GM12878 (cell line): ENCODE measurements at regions of chr9 and their contacts with region 1.

Region 1: GRCh38 chr9:122912964-122913673 is at the start of gene ZBTB6:
- DNase-seq: peak; percentile 84
- ATAC-seq: peak; percentile 98
- H3K4me3 ChIP-seq: peak within 1 kb of the TSS; percentile 78
- H3K27ac ChIP-seq: peak within 1 kb of the TSS; percentile 87
- H3K4me1 ChIP-seq: peaks cover 4% of the 10 kb centered on the region; the same call in 1 of the 2 replicates
- H3K27me3 ChIP-seq: no peaks in the 10 kb centered on the region
- CTCF ChIP-seq: no peak
- EP300 ChIP-seq: no peak
- POLR2A ChIP-seq: peak; percentile 92
- RAD21 ChIP-seq: peak; percentile 44; the same call in 1 of the 2 replicates
- polyA plus RNA-seq, gene ZBTB6: 1.7 to 3.0 TPM

Region 2: DNA sequence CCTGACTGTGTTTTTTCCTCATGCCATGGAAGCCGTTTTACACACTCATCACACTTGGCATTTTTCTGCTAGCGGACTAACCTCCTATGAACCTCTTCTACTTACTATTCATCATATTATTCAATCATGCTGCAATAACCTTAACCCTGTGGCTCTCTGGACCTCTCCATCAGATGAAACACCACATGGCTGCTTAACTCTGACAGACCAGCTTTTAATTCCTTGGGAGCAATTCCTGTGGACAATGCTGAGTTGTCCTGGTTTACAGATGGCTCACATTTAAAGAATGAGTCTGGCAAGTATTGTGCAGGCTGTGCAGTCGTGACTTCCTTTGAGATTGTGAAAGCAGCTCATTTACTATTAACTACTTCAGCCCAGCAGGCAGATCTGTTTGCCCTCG is 444.4 kb before region 1 on chr9:
- CTCF ChIA-PET with region 1: no interaction called
- POLR2A ChIA-PET with region 1: no interaction called
- RAD21 ChIA-PET with region 1: no interaction called
- SMC1A ChIA-PET with region 1: no interaction called
- in situ Hi-C with region 1: no loop called
- intact Hi-C with region 1: no loop called
- DNase-seq: no peak
- ATAC-seq: no peak
- H3K4me3 ChIP-seq: no peak overlapping the region
- H3K27ac ChIP-seq: no peak overlapping the region
- H3K4me1 ChIP-seq: no peaks in the 10 kb centered on the region
- H3K27me3 ChIP-seq: no peaks in the 10 kb centered on the region; a peak in 1 of 4 replicates
- CTCF ChIP-seq: no peak
- EP300 ChIP-seq: no peak
- POLR2A ChIP-seq: no peak
- RAD21 ChIP-seq: no peak

Region 3: DNA sequence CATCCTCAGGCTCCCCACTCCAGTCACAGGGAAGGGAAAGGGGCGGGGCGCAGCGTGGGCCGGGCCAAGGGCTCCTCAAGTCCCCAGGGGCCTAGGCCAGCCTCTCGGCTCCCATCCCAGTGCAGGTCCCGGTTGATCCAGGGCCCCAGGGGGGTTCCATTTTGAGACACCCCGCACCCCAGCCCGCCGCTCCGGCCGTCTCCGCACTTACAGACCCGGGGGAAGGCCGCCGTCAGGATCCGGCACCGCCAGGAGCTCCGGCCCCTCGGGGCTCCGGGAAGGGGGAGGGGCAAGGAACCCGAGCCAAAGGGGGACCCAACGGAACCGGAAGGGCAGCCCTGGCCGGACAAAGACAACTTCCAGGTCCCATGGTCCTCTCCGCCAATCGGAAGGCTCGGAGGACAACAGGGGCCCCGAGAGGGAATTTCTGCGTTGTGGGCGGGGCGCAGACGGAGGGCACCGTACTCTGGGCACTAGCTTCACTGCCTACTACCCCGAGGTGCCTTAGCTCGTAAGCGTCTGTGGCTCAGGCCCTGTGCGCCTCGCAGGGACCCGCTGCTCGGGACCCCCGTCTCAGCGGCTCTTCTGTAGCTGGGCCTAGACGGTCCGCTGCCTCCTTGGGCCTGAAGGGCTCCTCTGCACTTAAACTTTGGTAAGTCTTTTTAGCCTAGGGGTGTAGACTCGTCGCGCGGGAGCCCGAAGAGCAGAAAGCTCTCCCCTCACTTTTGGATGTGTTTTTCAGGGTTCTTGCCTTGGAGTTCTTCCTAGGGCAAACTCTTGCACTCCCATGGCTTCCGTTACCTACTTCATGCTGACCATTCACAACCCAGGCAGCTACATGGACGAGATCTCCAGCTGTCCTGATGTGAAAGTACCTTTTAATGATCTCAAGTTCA is 18.4 kb after region 1 on chr9 and contains the start of gene ZBTB26:
- CTCF ChIA-PET with region 1: interaction called, 4 read pairs
- POLR2A ChIA-PET with region 1: interaction called, 28 read pairs
- RAD21 ChIA-PET with region 1: interaction called, 21 read pairs
- SMC1A ChIA-PET with region 1: interaction called, 20 read pairs
- in situ Hi-C with region 1: no loop called
- intact Hi-C with region 1: loop called (anchors 1 kb)
- DNase-seq: peak; percentile 74
- ATAC-seq: peak; percentile 98
- H3K4me3 ChIP-seq: peak within 1 kb of the TSS; percentile 88
- H3K27ac ChIP-seq: peak within 1 kb of the TSS; percentile 56
- H3K4me1 ChIP-seq: peaks cover 4% of the 10 kb centered on the region
- H3K27me3 ChIP-seq: no peaks in the 10 kb centered on the region
- CTCF ChIP-seq: no peak
- EP300 ChIP-seq: no peak
- POLR2A ChIP-seq: peak; percentile 88
- RAD21 ChIP-seq: no peak
- polyA plus RNA-seq, gene ZBTB26: 1.8 to 2.4 TPM

Region 4: GRCh38 chr9:122940603-122941559 is 27.8 kb after region 1 on chr9 and contains the start of gene RABGAP1:
- CTCF ChIA-PET with region 1: interaction called, 8 read pairs
- POLR2A ChIA-PET with region 1: interaction called, 20 read pairs
- RAD21 ChIA-PET with region 1: interaction called, 6 read pairs
- SMC1A ChIA-PET with region 1: interaction called, 19 read pairs
- in situ Hi-C with region 1: no loop called
- intact Hi-C with region 1: no loop called
- DNase-seq: peak; percentile 94
- ATAC-seq: peak; percentile 97
- H3K4me3 ChIP-seq: peak within 1 kb of the TSS; percentile 96
- H3K27ac ChIP-seq: peak within 1 kb of the TSS; percentile 76
- H3K4me1 ChIP-seq: peaks cover 12% of the 10 kb centered on the region; the same call in 1 of the 2 replicates
- H3K27me3 ChIP-seq: no peaks in the 10 kb centered on the region
- CTCF ChIP-seq: no peak
- EP300 ChIP-seq: no peak
- POLR2A ChIP-seq: peak; percentile 93
- RAD21 ChIP-seq: no peak
- polyA plus RNA-seq, gene RABGAP1: 2.6 to 2.9 TPM